Esophagus squamous epithelium (tissue), 5 donors: ENCODE measurements at regions of chr6 and their contacts with region 1.

Region 1: GRCh38 chr6:116100419-116101301 is at the start of gene NT5DC1:
- DNase-seq: peak; percentile 28
- H3K4me3 ChIP-seq: peak within 1 kb of the TSS; percentile 77 to 91 (median 86)
- H3K27ac ChIP-seq: peak within 1 kb of the TSS; percentile 93 to 98 (median 96)
- H3K4me1 ChIP-seq: peaks cover 7 to 52% (median 17%) of the 10 kb centered on the region in 3 donors
- H3K27me3 ChIP-seq: no peaks in the 10 kb centered on the region
- CTCF ChIP-seq: peak in 5 of 6 experiments; percentile 21 to 43 (median 27)
- POLR2A ChIP-seq: peak in 2 of 4 donors; percentile 62 to 79
- total RNA-seq, gene NT5DC1: 6.3 to 11.7 (median 8.3) TPM

Region 2: DNA sequence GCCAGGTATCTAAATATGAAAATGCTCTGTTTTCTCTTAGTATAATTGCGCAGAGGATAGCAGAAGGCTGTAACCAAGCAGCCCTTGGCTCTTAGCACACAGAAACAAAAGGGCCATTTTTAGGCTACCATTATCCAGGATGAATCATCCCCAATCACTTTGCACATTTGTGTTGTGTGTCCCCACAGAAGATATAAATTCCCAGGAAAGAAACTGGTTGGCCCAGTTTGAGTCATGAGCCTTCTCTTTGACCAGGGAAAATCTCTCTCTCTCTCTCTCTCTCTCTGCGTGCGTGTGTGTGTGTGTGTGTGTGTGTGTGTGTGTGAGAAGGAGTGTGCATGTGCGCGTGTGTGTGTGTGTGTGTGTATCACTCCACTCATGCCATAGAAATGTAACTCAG is 218.5 kb before region 1 on chr6:
- intact Hi-C with region 1: no loop called
- DNase-seq: no peak
- H3K4me3 ChIP-seq: no peak overlapping the region
- H3K27ac ChIP-seq: peak overlapping the region in 2 of 4 donors; percentile 57 to 71
- H3K4me1 ChIP-seq: peaks cover 0 to 16% (median 0%) of the 10 kb centered on the region in 3 donors
- H3K27me3 ChIP-seq: no peaks in the 10 kb centered on the region
- CTCF ChIP-seq: no peak
- POLR2A ChIP-seq: no peak

Region 3: DNA sequence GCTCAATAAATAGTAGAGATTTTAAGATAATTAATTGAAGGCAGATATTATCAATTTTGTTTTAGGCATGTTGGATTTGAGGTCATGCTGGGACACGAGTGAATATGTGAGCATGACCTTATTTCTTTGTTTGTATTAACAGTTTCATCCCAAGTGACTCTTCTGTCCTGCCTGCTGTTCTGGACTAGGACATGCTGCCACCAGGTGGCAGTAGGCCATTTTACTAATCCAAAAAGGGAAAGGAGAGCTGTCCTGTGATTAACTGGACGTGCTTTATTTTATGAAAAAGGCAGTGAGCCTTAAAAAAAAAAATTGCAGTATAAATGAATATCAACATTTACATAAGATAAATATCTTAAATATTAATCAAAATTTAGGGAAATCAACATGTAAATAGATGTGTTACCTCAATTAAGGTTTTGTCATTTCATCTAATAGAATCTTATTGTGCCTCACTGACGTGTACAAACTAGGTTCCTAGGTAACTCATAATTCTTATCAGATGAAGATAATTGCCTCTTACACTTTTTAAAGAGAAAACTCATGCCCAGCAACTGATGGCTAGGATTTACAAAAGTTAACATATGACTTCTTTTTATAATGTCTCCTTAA is 89.8 kb before region 1 on chr6:
- intact Hi-C with region 1: loop called (anchors 5 kb)
- DNase-seq: no peak
- H3K4me3 ChIP-seq: no peak overlapping the region
- H3K27ac ChIP-seq: peak overlapping the region in 1 of 4 donors; percentile 43
- H3K4me1 ChIP-seq: peaks cover 0 to 38% (median 6%) of the 10 kb centered on the region in 3 donors
- H3K27me3 ChIP-seq: no peaks in the 10 kb centered on the region
- CTCF ChIP-seq: peak; percentile 63 to 83 (median 76)
- POLR2A ChIP-seq: no peak